Left cardiac atrium (tissue), 4 donors: ENCODE measurements at regions of chr9 and their contacts with region 1.

Region 1: GRCh38 chr9:96449845-96450612 is at the start of gene HABP4:
- DNase-seq: peak; percentile 98
- ATAC-seq: peak; percentile 99
- total RNA-seq, gene HABP4: 19.2 to 19.5 TPM

Region 2: GRCh38 chr9:96327694-96328352 is 122.2 kb before region 1 on chr9:
- intact Hi-C with region 1: loop called in 1 of 2 experiments (anchors 5 kb)
- DNase-seq: no peak
- ATAC-seq: peak; percentile 34 to 82

Region 3: GRCh38 chr9:96418074-96418809 is 31.8 kb before region 1 on chr9 and contains the start of gene ZNF367:
- intact Hi-C with region 1: loop called in 1 of 2 experiments (anchors 2 kb)
- DNase-seq: peak; percentile 99
- ATAC-seq: peak; percentile 91 to 94
- total RNA-seq, gene ZNF367: 2.2 to 3.1 TPM

Region 4: DNA sequence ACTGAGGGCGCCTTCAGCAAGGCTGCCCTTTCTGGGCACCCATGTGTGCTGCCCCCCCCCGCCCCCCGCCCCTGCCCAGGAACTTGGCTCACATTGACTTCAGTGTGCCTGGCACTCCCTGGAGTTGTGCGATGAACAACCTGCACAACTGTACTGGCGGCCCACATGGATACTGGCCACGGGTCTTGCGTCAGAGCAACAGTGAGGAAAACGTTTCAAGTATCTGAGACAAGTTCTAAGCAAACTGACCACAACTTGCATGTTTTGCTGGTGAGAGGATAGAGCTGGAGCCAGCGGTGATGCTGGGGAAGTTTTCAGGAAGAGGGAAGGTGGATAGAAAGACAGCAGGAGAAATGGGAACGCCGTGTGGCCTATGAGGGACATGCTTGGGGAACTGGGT is 45.3 kb after region 1 on chr9:
- intact Hi-C with region 1: no loop called
- DNase-seq: no peak
- ATAC-seq: peak in 1 of 2 donors; percentile 22

Region 5: DNA sequence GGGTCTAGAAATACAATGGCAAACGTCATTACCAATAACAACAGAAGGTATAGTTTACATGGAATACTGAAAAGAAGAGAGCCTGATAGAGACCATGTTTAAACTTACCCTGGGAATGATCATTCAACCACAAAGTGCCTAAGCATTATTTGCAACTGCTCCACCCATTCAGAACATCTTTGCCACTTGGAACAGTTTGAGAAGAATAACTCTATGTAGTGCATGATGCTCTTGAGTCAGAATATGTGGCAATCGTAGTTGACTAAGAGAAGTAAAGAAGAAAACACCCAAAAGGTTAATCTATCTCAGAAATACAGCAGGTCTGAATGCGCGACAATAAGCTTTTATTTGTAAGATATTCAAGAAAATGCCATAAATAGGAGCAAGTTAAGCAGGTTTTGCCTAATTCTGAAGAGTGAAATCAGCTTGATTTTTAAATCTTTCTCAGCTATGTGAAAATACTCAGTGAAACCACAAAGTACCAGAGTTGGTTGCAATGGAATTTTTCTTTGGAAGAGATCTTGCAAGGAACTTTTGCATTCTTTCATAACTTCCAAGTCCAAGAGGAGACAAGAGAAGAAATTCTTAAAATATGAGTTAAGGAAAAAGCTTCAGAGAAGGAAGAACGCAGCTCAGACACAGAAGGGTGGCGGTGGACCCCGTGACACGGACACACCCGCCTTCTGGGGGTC is 64.2 kb after region 1 on chr9:
- intact Hi-C with region 1: no loop called
- DNase-seq: no peak
- ATAC-seq: peak; percentile 44 to 64

Region 6: DNA sequence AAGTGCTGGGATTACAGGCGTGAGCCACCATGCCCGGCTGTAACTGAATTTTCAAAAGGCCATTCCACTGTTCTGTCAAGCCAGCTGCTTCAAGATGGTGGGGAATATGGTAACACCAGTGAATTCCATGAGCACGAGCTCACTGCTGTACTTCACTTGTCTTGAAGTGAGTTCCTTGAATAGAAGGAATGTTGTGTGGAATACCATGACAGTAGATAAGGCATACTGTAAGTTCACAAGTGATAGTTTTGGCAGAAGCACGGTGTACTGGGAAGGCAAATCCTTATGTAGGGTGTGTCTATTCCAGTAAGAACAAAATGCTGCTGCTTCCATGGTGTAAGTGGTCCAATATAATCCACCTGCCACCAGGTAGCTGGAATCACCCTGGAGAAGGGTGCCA is 211.7 kb after region 1 on chr9:
- intact Hi-C with region 1: loop called in 1 of 2 experiments (anchors 10 kb)
- DNase-seq: no peak
- ATAC-seq: no peak

Region 7: DNA sequence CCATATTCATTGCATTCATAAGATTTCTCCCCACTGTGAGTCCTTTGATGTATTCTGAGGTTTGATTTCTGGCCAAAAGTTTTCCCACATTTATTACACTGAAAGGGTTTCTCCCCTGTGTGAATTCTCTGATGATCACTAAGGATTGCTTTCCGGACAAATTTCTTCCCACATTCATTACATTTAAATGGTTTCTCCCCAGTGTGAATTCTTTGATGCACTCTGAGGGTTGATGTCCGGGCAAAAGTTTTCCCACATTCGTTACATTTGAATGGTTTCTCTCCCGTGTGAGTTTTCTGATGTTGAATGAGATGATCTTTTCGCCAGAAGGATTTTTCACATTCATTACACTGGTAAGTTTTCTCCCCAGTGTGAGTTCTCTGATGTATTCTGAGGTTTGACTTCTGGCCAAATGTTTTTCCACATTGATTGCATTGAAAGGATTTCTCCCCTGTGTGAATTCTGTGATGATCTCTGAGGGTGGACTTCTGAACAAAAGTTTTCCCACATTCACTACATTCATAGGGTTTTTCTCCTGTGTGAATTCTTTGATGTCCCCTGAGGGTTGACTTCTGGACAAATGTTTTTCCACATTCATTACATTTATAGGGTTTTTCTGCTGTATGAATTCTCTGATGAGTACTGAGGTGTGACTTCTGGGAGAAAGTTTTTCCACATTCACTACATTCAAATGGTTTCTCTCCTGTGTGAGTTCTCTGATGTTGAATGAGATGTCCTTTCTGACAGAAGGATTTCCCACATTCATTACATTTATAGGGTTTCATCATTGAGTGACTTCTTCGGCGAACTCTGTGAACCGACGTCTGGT is 309.0 kb after region 1 on chr9:
- intact Hi-C with region 1: no loop called
- DNase-seq: no peak
- ATAC-seq: no peak